AG04450 (cell line): ENCODE measurements at regions of chr17 and their contacts with region 1.

Region 1: GRCh38 chr17:40559954-40560591 is 5.2 kb downstream of the CCR7 start:
- DNase-seq: peak; percentile 89
- H3K4me3 ChIP-seq: no peak overlapping the region
- H3K27ac ChIP-seq: peak overlapping the region; percentile 77
- H3K27me3 ChIP-seq: peaks cover 19% of the 10 kb centered on the region
- CTCF ChIP-seq: peak; percentile 99

Region 2: GRCh38 chr17:40399185-40399584 is 160.9 kb before region 1 on chr17:
- CTCF ChIA-PET with region 1: interaction called, 18 read pairs
- POLR2A ChIA-PET with region 1: no interaction called
- DNase-seq: peak; percentile 21
- H3K4me3 ChIP-seq: no peak overlapping the region
- H3K27ac ChIP-seq: no peak overlapping the region
- H3K27me3 ChIP-seq: no peaks in the 10 kb centered on the region
- CTCF ChIP-seq: peak; percentile 64

Region 3: DNA sequence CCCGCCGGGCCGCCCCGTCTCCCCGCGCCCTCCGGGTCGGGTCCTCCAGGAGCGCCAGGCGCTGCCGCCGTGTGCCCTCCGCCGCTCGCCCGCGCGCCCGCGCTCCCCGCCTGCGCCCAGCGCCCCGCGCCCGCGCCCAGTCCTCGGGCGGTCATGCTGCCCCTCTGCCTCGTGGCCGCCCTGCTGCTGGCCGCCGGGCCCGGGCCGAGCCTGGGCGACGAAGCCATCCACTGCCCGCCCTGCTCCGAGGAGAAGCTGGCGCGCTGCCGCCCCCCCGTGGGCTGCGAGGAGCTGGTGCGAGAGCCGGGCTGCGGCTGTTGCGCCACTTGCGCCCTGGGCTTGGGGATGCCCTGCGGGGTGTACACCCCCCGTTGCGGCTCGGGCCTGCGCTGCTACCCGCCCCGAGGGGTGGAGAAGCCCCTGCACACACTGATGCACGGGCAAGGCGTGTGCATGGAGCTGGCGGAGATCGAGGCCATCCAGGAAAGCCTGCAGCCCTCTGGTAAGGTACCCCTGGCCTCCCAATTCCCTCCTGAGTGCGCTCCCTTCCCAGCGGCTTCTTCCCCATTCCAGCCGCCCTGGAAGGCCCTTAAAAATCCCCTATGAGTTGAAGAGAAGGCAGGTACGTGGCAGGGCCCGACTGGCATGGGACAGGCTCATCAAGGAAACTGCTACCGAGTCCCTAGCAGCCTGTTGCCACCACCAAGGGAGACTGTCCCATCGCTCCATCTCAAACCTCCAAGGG is 116.3 kb before region 1 on chr17:
- CTCF ChIA-PET with region 1: interaction called, 22 read pairs
- POLR2A ChIA-PET with region 1: interaction called, 3 read pairs
- DNase-seq: no peak
- H3K4me3 ChIP-seq: peak overlapping the region; percentile 98
- H3K27ac ChIP-seq: peak overlapping the region; percentile 39
- H3K27me3 ChIP-seq: no peaks in the 10 kb centered on the region
- CTCF ChIP-seq: peak; percentile 48

Region 4: DNA sequence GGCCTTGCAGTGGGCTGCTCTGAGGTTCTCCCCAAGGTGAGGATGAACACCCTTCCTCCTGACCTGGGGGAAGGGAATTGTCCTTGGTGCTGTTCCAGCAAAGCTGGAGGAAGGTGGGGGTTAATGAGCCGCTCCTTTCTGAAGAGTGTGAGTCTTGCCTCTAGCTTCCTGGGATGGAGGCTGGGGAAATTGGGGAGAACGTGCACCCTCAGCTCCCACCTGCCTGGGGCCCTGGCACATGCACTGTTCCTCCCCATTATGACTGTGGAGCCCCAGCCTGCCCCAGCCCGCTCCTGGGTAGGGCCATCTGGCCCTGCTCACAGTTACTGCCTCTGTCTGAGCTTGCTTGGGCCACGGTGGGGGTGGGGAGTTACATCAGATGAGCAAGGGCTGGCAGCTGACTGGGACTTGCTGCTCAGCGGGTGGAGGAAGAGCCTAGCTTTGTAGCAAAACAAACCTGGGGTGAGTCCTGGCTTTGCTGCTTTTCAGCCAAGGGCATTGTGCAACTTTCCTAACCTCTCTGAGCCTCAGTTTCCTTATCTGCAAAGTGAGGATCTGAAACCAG is 69.7 kb before region 1 on chr17:
- CTCF ChIA-PET with region 1: interaction called, 11 read pairs
- POLR2A ChIA-PET with region 1: no interaction called
- DNase-seq: peak; percentile 59
- H3K4me3 ChIP-seq: no peak overlapping the region
- H3K27ac ChIP-seq: peak overlapping the region; percentile 57
- H3K27me3 ChIP-seq: no peaks in the 10 kb centered on the region
- CTCF ChIP-seq: no peak